ENCODE measurements at regions of chr7 and their contacts with region 1.

Region 1: DNA sequence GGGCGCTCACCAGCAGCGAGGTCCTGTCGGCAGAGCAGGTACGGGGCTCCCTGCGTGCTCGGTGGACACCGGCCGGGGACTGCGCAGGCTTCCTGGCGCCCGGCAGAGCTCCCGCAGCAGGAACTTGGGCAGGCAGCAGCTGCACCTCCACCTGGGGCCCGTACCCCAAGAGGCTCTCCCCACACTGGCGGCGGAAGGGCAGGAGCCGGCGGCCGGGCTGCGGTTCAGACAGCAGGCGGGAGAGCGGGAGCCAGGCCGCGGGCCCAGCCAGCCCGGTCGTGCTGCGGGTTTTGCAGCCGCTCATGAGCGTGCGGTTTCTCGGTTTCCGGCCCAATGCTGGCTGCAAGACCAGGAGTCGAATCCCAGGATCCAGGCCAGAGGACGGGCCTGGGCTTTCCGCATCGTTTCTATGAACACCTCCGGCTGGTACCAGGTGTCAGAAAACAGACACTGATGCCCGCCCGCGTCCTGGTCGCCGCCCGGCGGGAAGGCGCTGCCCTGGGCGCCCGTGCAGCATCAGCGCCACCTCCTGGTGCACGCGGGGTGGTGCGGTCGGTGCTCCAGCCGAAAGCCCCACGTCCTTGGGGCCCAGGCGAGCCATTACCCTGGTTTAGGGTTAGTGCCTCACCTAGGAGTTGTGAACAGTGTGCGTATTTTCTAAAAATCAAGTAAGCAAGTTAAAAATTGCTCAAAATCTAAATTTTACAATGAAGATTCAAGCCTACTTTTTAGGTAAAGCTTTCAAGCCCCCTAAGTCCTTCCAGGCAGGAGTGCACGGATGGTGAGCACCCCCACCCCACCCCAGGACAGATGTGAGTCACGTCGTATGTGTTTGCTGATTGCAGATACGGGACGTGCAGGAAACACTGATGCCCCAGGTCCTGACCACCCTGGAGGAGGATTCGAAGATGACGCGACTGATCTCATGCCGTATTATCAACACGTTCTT is 47.4 kb upstream of the PRKAR1B start:
- DNase-seq: no peak
- H3K4me3 ChIP-seq: no peak overlapping the region
- H3K27ac ChIP-seq: peak overlapping the region in 1 of 4 donors; percentile 11
- H3K4me1 ChIP-seq: peaks cover 22 to 47% (median 40%) of the 10 kb centered on the region in 4 donors
- H3K27me3 ChIP-seq: no peaks in the 10 kb centered on the region
- CTCF ChIP-seq: peak in 2 of 3 experiments; percentile 94 to 96
- EP300 ChIP-seq: no peak
- POLR2A ChIP-seq: no peak

Region 2: GRCh38 chr7:322111-322671 is 452.2 kb before region 1 on chr7:
- intact Hi-C with region 1: loop called (anchors 1 kb)
- DNase-seq: no peak
- H3K4me3 ChIP-seq: peak overlapping the region in 3 of 4 donors; percentile 29 to 45 (median 34)
- H3K27ac ChIP-seq: peak overlapping the region in 2 of 4 donors; percentile 22 to 28
- H3K4me1 ChIP-seq: peaks cover 8 to 15% (median 13%) of the 10 kb centered on the region in 4 donors
- H3K27me3 ChIP-seq: peaks cover 0 to 34% (median 0%) of the 10 kb centered on the region in 4 donors
- CTCF ChIP-seq: peak in 2 of 3 experiments; percentile 89 to 99
- EP300 ChIP-seq: no peak
- POLR2A ChIP-seq: no peak

Region 3: GRCh38 chr7:668139-668931 is 106.1 kb before region 1 on chr7:
- intact Hi-C with region 1: loop called (anchors 10 kb)
- DNase-seq: no peak
- H3K4me3 ChIP-seq: peak overlapping the region; percentile 8 to 26 (median 20)
- H3K27ac ChIP-seq: peak overlapping the region; percentile 77 to 84 (median 82)
- H3K4me1 ChIP-seq: peaks cover 44 to 56% (median 52%) of the 10 kb centered on the region in 4 donors
- H3K27me3 ChIP-seq: no peaks in the 10 kb centered on the region
- CTCF ChIP-seq: no peak
- EP300 ChIP-seq: no peak
- POLR2A ChIP-seq: no peak

Measured in esophagus muscularis mucosa (tissue), 4 donors.